Activated CD4-positive, alpha-beta T cell treated with anti-CD3 and anti-CD28 coated beads for 36 hours (primary cell): ENCODE measurements at regions of chr11 and their contacts with region 1.

Region 1: GRCh38 chr11:57772562-57772961 is 11.0 kb downstream of the CTNND1 start:
- DNase-seq: no peak
- ATAC-seq: no peak
- H3K4me3 Mint-ChIP-seq: no peak overlapping the region
- H3K27ac Mint-ChIP-seq: no peak overlapping the region
- H3K4me1 Mint-ChIP-seq: peaks cover 2% of the 10 kb centered on the region
- H3K27me3 Mint-ChIP-seq: no peaks in the 10 kb centered on the region

Region 2: GRCh38 chr11:57899378-57899777 is 126.8 kb after region 1 on chr11:
- CTCF ChIA-PET with region 1: no interaction called
- POLR2A ChIA-PET with region 1: no interaction called
- intact Hi-C with region 1: loop called in 1 of 2 experiments (anchors 5 kb)
- DNase-seq: no peak
- ATAC-seq: no peak
- H3K4me3 Mint-ChIP-seq: no peak overlapping the region
- H3K27ac Mint-ChIP-seq: no peak overlapping the region
- H3K4me1 Mint-ChIP-seq: peaks cover 3% of the 10 kb centered on the region
- H3K27me3 Mint-ChIP-seq: peaks cover 24% of the 10 kb centered on the region